ENCODE measurements at regions of chr15 and their contacts with region 1.

Region 1: GRCh38 chr15:66707310-66708082 is 5.5 kb downstream of the SMAD6 start:
- DNase-seq: peak in 4 of 6 donors; percentile 38 to 77 (median 52)
- ATAC-seq: peak; percentile 32 to 61 (median 56)
- H3K4me3 ChIP-seq: no peak overlapping the region
- H3K27ac ChIP-seq: peak overlapping the region in 2 of 4 donors; percentile 15 to 28
- H3K4me1 ChIP-seq: peaks cover 0 to 31% (median 0%) of the 10 kb centered on the region in 3 donors
- H3K27me3 ChIP-seq: no peaks in the 10 kb centered on the region
- CTCF ChIP-seq: no peak

Region 2: DNA sequence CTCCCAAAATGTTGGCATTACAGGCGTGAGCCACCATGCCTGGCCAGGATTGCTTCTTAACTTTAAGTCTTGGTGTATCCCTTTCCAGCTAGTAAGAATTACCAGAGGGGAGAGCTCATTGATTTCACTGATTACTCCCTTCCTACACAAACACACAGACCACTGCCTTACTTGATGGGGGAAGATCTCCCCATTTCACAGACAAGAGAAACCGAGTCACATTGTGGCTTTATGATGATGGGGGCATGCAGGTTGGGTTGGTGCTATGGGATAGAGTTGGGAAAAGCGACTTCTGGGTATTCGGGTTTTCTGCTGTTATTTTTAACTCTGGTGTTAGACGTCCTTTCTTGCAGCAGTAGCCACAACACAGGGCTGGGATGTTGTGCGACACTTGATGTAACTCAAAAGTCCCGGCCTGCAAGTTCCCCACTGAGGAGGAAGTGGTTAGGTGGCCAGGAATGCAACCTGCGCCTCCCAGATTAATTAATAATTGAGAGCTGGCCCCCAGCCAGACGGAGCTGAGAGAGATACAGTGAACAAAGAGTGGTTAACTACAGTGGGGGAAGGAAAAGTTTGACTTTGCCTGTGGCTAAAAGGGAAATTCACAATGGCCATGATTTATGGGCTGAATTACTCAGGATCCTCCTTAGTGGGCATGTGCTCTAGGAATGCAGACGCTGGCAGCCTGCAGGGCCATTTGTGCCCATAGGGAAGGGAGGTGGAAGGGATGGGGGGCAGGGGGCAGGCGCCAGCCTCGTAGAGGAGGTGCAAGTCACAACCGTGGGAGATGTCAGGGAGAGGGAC is 58.2 kb after region 1 on chr15:
- intact Hi-C with region 1: loop called in 2 of 3 experiments (anchors 5 kb)
- DNase-seq: peak; percentile 86 to 92 (median 88)
- ATAC-seq: peak; percentile 71 to 83 (median 80)
- H3K4me3 ChIP-seq: no peak overlapping the region
- H3K27ac ChIP-seq: peak overlapping the region; percentile 48 to 80 (median 72)
- H3K4me1 ChIP-seq: peaks cover 35 to 61% (median 55%) of the 10 kb centered on the region in 3 donors
- H3K27me3 ChIP-seq: no peaks in the 10 kb centered on the region
- CTCF ChIP-seq: no peak

Measured in pancreas (tissue), 10 donors.